ENCODE measurements at regions of chr14 and their contacts with region 1.

Region 1: DNA sequence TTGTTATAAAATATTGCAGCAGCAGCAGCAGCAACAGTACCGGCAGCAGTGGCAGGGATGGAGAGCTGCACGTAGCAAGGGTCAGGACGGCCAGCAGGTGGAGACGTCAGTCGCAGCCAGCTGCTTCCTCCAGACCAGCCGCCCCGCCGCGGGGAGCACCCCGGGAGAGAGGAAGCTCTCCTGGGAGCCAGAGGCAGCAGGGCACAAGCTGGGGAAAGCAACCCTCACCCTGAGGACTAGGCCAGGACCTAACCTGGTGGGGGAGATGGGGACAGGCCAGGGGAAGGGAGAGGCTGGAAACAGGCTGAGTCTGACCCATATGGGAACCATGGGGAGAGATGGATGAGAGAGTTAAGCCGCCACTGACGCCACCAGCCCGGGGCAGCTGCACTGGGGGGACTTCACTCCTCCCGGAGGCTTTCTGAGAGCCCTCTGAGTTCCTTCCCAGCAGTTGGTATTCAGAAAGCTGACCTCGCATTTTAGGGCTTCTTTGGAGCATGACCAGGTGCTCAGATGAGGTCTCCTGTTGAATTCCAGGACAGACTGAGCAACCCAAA is 56.3 kb downstream of the SPTB start:
- DNase-seq: peak; percentile 90
- CTCF ChIP-seq: peak; percentile 85

Region 2: GRCh38 chr14:64760146-64760755 is 63.1 kb before region 1 on chr14:
- CTCF ChIA-PET with region 1: no interaction called
- POLR2A ChIA-PET with region 1: no interaction called
- DNase-seq: peak; percentile 76
- CTCF ChIP-seq: peak; percentile 61

Region 3: GRCh38 chr14:64806202-64806860 is 17.1 kb before region 1 on chr14:
- CTCF ChIA-PET with region 1: interaction called, 12 read pairs
- POLR2A ChIA-PET with region 1: no interaction called
- DNase-seq: no peak
- CTCF ChIP-seq: no peak

Region 4: GRCh38 chr14:64835431-64835830 is 12.0 kb after region 1 on chr14:
- CTCF ChIA-PET with region 1: interaction called, 19 read pairs
- POLR2A ChIA-PET with region 1: no interaction called
- DNase-seq: no peak
- CTCF ChIP-seq: no peak

Region 5: DNA sequence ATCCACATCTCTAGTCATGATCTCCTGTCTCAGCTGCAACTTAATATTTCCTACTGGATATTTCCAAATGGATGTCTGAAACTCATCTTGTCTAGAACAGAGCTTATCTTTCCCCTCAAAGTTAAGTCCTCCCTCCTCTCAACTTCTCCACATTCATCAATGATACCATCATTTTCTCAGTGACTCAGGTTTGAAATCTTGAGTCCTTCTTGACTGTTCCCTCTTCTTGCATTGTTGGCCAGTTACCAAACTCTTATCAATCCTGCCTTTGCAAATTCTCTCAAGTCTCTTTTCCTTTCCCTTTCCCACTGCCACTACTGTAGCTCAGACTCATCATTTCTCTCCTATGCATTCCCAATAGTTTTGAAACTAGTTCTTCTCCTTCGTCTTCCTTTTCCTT is 76.6 kb after region 1 on chr14:
- CTCF ChIA-PET with region 1: interaction called, 21 read pairs
- POLR2A ChIA-PET with region 1: no interaction called
- DNase-seq: no peak
- CTCF ChIP-seq: no peak

Region 6: DNA sequence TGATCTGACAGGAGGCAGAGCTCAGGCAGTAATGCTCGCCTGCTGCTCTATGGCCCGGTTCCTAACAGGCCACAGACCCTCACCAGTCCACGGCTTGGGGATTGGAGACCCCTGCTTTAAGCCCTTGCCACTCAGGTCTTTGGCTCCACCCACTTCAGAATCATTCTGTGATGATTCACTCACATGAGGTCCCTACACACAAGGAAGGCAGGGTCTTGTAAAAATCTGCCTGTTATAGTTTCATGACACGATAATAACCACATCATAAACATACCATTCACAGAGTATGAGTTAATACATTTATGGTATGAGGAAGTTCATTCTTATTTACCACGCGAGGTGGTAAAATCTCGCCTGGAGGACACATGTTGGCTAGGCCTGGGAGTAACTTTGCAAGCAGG is 307.9 kb after region 1 on chr14:
- CTCF ChIA-PET with region 1: no interaction called
- POLR2A ChIA-PET with region 1: no interaction called
- DNase-seq: no peak
- CTCF ChIP-seq: no peak

Measured in GM10248 (cell line).